ENCODE measurements at regions of chr2 and their contacts with region 1.

Region 1: GRCh38 chr2:64330281-64331113 is 123.5 kb upstream of the LGALSL start:
- DNase-seq: peak; percentile 86
- H3K4me3 ChIP-seq: peak overlapping the region; percentile 15 to 34 (median 20)
- H3K27ac ChIP-seq: no peak overlapping the region
- H3K4me1 ChIP-seq: peaks cover 14% of the 10 kb centered on the region
- H3K27me3 ChIP-seq: no peaks in the 10 kb centered on the region
- CTCF ChIP-seq: peak; percentile 83 to 87
- POLR2A ChIP-seq: no peak

Region 2: GRCh38 chr2:64260817-64261216 is 69.7 kb before region 1 on chr2:
- CTCF ChIA-PET with region 1: interaction called, 10 read pairs
- POLR2A ChIA-PET with region 1: no interaction called
- dilution Hi-C with region 1: no loop called
- intact Hi-C with region 1: loop called (anchors 2 kb)
- DNase-seq: peak; percentile 82
- H3K4me3 ChIP-seq: peak overlapping the region in 1 of 3 experiments; percentile 2
- H3K27ac ChIP-seq: peak overlapping the region; percentile 99
- H3K4me1 ChIP-seq: peaks cover 44% of the 10 kb centered on the region
- H3K27me3 ChIP-seq: no peaks in the 10 kb centered on the region
- CTCF ChIP-seq: no peak
- POLR2A ChIP-seq: peak; percentile 48

Region 3: DNA sequence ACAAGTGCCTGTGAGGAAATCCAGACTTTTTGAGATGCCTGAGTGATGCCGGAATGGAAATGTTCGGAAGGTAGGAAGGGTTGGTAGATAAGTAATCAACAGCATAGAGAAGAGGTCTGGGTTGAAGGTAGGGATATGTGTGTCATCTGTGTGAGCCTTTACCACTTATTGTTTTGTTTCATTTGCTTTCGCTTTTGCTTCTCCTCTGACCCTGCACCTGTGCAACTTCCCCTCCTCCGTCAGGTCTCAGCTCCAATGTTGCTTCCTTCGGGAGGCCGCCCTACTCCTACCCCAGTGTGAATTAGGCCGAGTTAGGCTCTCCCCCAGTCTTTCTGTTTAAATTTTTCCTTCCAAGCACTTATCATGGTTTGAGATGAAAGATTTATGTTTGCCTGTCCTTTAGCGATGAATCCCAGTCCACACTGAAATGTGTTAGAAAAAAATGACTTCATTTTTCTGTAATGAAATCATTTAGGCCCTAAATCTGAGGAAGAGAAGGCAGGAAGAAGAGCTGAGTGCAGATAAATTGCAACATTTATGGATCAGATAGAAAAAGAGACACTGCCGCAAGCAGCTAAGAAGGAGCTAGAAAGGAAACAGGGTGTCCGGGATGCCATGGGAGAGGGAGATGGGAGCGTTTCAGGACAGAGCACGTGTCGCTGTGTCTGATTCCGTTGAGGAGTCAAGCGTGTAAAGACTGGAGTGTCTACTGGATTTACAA is 46.7 kb before region 1 on chr2:
- CTCF ChIA-PET with region 1: no interaction called
- POLR2A ChIA-PET with region 1: no interaction called
- dilution Hi-C with region 1: no loop called
- intact Hi-C with region 1: no loop called
- DNase-seq: peak; percentile 22
- H3K4me3 ChIP-seq: no peak overlapping the region
- H3K27ac ChIP-seq: no peak overlapping the region
- H3K4me1 ChIP-seq: no peaks in the 10 kb centered on the region
- H3K27me3 ChIP-seq: no peaks in the 10 kb centered on the region
- CTCF ChIP-seq: no peak
- POLR2A ChIP-seq: no peak

Region 4: DNA sequence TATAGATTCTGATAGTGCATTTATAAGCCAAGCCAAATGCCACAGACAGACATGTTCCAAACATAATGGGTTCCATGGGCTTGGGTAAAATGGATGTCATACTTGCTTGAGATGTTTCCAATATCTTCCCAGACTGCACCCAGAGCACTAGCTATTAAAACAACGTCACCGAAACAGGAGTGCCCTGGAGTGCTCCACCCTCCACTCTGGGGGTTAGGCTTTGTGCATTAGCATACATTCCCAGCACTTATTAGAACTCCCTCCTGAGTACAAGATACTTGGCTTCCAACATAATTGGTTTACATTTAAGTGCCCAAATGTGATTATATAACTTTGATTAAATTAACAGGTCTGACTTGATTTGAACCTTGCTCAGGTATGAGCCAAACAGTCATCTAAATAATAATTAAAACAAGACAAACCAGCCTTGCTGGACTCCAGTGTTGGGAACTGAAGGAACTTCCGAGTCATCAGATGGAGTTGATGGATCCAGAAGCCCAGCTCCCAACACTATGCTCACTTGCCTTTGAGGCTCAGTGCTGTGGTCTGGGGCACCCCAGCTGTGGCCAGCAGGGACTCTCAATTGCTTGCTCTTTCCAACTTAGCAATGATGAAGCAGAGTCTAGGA is 63.0 kb after region 1 on chr2:
- CTCF ChIA-PET with region 1: interaction called, 10 read pairs
- POLR2A ChIA-PET with region 1: no interaction called
- dilution Hi-C with region 1: no loop called
- intact Hi-C with region 1: no loop called
- DNase-seq: no peak
- H3K4me3 ChIP-seq: no peak overlapping the region
- H3K27ac ChIP-seq: no peak overlapping the region
- H3K4me1 ChIP-seq: no peaks in the 10 kb centered on the region
- H3K27me3 ChIP-seq: peaks cover 2 to 17% of the 10 kb centered on the region in 2 experiments
- CTCF ChIP-seq: no peak
- POLR2A ChIP-seq: no peak

Region 5: GRCh38 chr2:64482765-64483504 is 152.4 kb after region 1 on chr2:
- CTCF ChIA-PET with region 1: interaction called, 185 read pairs
- POLR2A ChIA-PET with region 1: interaction called, 3 read pairs
- dilution Hi-C with region 1: no loop called
- intact Hi-C with region 1: loop called (anchors 1 kb)
- DNase-seq: no peak
- H3K4me3 ChIP-seq: no peak overlapping the region
- H3K27ac ChIP-seq: no peak overlapping the region
- H3K4me1 ChIP-seq: peaks cover 5% of the 10 kb centered on the region
- H3K27me3 ChIP-seq: peaks cover 13 to 19% of the 10 kb centered on the region in 2 experiments
- CTCF ChIP-seq: no peak
- POLR2A ChIP-seq: no peak

Region 6: DNA sequence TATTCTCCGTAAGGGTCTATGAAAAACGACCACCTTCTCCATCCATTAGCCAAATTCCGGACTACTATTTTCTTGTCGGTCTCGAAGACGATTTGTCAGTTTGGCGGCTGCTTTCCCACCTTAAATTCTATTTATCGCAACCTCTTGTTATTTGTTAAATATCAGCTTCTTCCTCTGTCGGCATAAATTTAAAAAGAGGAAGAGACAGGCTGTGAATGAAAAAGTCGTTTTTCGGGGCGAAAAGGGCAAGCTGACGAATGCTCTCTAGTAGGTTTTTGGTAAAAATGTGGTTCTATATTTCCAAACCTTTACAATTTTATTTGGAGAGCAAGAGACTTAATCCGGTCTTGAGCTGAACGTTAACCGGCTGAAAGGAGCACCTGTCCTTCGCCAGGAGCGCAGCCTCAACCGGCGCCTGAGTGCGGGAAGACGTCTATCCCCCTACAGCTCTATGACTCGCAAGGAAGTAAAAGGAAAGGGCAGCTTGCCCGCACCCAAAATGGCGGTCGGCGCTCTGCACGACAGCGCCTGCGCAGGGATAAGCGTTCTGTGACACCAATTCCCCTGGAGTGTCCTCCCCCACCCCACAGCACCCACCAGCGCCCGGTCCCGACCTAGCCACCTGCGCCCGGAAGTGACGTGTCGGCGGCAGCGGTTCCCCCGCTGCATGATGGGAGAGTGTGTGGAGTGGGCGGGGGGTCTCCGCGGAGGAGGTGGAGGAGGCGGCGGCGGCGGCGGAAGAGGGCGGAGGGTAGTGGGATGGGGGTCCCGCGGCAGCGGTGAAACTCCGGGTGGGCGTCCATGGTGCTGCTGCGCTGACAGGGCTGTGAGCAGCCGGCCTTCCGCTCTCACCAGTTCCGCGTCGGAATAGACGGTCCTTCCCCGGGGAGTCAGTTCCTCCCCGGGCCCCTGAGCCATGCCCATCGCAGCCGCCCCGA is 193.4 kb after region 1 on chr2 and contains the start of gene AFTPH:
- CTCF ChIA-PET with region 1: interaction called, 84 read pairs
- POLR2A ChIA-PET with region 1: no interaction called
- dilution Hi-C with region 1: no loop called
- intact Hi-C with region 1: loop called (anchors 1 kb)
- DNase-seq: peak; percentile 100
- H3K4me3 ChIP-seq: peak within 1 kb of the TSS; percentile 93 to 98 (median 97)
- H3K27ac ChIP-seq: peak within 1 kb of the TSS; percentile 82
- H3K4me1 ChIP-seq: peaks cover 12% of the 10 kb centered on the region
- H3K27me3 ChIP-seq: peaks cover 7 to 8% of the 10 kb centered on the region in 2 experiments
- CTCF ChIP-seq: no peak
- POLR2A ChIP-seq: peak; percentile 46
- total RNA-seq, gene AFTPH: 15.3 and 16.7 TPM in 2 replicates

Region 7: GRCh38 chr2:64865073-64865830 is 534.8 kb after region 1 on chr2:
- CTCF ChIA-PET with region 1: interaction called, 3 read pairs
- POLR2A ChIA-PET with region 1: no interaction called
- dilution Hi-C with region 1: no loop called
- intact Hi-C with region 1: loop called (anchors 2 kb)
- DNase-seq: peak; percentile 71
- H3K4me3 ChIP-seq: peak overlapping the region; percentile 42 to 46 (median 44)
- H3K27ac ChIP-seq: peak overlapping the region; percentile 66
- H3K4me1 ChIP-seq: peaks cover 6% of the 10 kb centered on the region
- H3K27me3 ChIP-seq: no peaks in the 10 kb centered on the region
- CTCF ChIP-seq: peak; percentile 43 to 94
- POLR2A ChIP-seq: no peak

Measured in endothelial cell of umbilical vein (primary cell).